ENCODE measurements at regions of chr6 and their contacts with region 1.

Region 1: GRCh38 chr6:163956571-163957407 is 542.3 kb downstream of the QKI start:
- DNase-seq: peak; percentile 68
- H3K4me3 ChIP-seq: no peak overlapping the region
- H3K27ac ChIP-seq: no peak overlapping the region
- H3K4me1 ChIP-seq: no peaks in the 10 kb centered on the region
- H3K27me3 ChIP-seq: no peaks in the 10 kb centered on the region
- CTCF ChIP-seq: peak; percentile 81

Region 2: DNA sequence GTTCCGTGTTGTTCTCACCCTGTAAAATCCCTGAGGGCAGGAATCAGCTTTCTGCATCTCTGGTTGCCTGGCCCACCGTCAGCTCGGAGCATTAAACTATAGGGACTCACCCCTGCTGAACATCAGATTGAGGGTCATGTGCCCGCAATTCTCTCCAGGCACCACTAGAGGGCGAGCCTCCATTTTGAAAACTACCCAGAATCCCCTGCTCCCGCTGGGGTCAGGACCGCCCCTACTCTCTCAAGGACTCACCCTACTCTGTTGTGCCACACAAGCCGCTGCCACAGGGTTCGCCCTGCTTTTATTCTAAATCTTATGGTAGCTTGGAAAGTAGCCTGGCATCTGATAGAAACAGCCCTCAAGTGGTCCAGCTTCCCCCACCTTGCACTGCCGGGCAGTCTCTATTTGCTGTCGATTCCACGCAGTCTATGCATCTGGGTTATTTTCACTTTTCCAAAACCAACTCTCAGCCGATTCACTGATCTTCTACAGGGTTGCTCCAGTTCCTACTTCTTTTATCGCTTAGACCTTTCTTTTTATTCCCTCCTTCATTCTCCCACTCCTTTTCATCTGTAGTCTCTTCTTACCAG is 786.4 kb before region 1 on chr6:
- intact Hi-C with region 1: loop called (anchors 10 kb)
- DNase-seq: no peak
- H3K4me3 ChIP-seq: no peak overlapping the region
- H3K27ac ChIP-seq: no peak overlapping the region
- H3K4me1 ChIP-seq: no peaks in the 10 kb centered on the region
- H3K27me3 ChIP-seq: no peaks in the 10 kb centered on the region
- CTCF ChIP-seq: peak; percentile 52

Region 3: GRCh38 chr6:163419413-163420288 is 537.1 kb before region 1 on chr6:
- intact Hi-C with region 1: loop called (anchors 5 kb)
- DNase-seq: no peak
- H3K4me3 ChIP-seq: no peak overlapping the region
- H3K27ac ChIP-seq: no peak overlapping the region
- H3K4me1 ChIP-seq: no peaks in the 10 kb centered on the region
- H3K27me3 ChIP-seq: peaks cover 13% of the 10 kb centered on the region
- CTCF ChIP-seq: no peak